GM23248 (cell line): ENCODE measurements at regions of chr12 and their contacts with region 1.

Region 1: DNA sequence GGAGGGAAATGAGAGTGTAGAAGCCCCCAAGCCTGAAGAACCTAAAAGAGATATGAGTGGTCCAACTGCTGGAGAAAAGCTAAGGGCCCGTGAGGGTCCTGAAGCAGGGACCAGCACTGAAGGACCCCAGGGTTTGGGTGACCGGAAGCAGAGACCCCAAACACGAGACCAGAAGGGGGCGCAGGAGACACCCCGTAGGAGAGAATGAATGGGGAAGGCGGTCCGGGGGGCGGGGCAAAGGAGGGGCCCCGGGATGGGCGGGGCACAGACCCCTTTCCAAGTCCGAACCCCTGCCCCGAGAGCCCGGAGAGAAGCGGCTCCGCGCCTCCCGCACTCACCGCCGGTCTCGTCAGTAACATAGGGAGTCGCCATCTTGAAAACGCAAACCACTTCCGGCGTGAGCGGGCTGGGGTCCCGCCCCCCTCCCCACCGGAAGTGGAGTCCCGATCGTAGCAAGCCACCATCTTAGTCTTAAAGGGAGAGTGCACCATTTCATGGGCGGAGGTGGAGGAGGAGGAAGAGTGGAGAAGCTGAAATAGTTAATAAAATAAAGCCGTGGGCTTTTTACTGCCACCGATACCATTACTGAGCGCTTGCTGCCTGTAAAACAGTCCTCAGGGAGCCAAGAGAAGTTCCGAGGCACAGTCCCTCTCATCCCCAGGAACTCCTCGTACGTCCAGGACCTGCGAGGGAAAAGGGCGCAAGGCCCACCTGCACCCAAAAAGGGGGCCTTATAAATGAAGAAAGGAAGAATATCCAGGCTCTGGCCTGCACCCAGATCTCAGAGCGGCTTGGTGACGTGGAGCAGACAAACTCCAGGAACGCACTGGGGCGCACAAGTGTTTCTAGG is 731 bp downstream of the PYM1 start:
- DNase-seq: peak; percentile 91
- H3K4me3 ChIP-seq: peak overlapping the region; percentile 98
- H3K27ac ChIP-seq: peak overlapping the region; percentile 94
- H3K4me1 ChIP-seq: peaks cover 28% of the 10 kb centered on the region
- H3K27me3 ChIP-seq: no peaks in the 10 kb centered on the region

Region 2: DNA sequence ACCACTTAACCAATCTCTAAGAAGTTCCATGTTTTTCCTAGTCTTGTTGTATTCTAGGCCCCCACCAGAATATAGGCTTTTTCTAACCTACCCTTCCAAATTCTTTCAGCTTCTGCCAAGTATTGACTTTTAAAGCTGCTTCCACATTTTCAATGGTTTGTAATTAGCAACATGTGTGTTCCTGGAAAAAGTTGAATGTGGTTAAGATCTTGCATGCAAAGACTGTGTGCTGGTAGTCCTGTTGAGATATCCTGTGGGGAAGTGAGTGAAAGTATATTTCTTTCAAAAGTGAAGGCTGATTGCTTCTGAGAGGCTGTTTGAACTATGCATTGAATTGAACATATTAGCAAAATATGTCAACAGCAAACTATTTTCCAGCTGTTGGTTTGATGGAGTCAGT is 378.2 kb before region 1 on chr12:
- in situ Hi-C with region 1: no loop called
- DNase-seq: no peak
- H3K4me3 ChIP-seq: no peak overlapping the region
- H3K27ac ChIP-seq: no peak overlapping the region
- H3K4me1 ChIP-seq: no peaks in the 10 kb centered on the region
- H3K27me3 ChIP-seq: no peaks in the 10 kb centered on the region

Region 3: DNA sequence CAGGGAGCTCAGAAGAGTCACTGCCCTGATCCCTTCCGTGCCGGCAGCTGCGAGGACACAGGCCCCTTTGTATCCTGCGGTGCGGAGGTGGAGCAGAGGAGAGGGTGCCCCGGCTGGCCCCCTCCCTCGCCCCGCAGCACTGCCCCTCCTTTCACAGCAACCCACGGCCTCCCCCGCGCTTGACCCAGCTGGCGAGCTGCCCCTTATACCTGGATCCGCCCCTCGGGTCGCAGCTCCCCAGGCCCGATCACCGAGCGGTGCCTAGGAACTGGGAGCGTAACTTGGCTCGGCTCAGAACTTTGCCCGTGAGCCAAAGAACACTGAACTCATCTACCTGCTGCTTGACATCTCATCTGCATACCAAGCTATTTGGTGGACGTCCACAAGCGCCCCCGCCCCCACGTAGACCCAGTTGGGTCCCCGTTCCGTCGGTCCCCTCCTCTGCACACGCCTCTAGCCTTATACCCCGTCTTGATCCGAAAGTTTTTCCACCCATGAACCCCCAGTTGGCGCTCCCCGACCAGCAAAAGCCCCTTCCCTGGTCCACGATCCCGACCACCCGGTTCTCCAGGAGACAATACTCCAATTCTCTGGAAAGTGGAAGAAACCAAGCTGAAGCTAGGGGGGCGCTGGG is 96.9 kb before region 1 on chr12:
- in situ Hi-C with region 1: loop called (anchors 10 kb)
- DNase-seq: no peak
- H3K4me3 ChIP-seq: peak overlapping the region; percentile 90
- H3K27ac ChIP-seq: peak overlapping the region; percentile 76
- H3K4me1 ChIP-seq: peaks cover 17% of the 10 kb centered on the region
- H3K27me3 ChIP-seq: no peaks in the 10 kb centered on the region

Region 4: GRCh38 chr12:55842681-55843429 is 84.1 kb before region 1 on chr12 and contains the start of gene MMP19:
- in situ Hi-C with region 1: loop called (anchors 5 kb)
- DNase-seq: peak; percentile 87
- H3K4me3 ChIP-seq: peak within 1 kb of the TSS; percentile 77
- H3K27ac ChIP-seq: peak within 1 kb of the TSS; percentile 26
- H3K4me1 ChIP-seq: peaks cover 44% of the 10 kb centered on the region
- H3K27me3 ChIP-seq: no peaks in the 10 kb centered on the region
- total RNA-seq, gene MMP19: 17.6 and 26.3 TPM in 2 replicates

Region 5: DNA sequence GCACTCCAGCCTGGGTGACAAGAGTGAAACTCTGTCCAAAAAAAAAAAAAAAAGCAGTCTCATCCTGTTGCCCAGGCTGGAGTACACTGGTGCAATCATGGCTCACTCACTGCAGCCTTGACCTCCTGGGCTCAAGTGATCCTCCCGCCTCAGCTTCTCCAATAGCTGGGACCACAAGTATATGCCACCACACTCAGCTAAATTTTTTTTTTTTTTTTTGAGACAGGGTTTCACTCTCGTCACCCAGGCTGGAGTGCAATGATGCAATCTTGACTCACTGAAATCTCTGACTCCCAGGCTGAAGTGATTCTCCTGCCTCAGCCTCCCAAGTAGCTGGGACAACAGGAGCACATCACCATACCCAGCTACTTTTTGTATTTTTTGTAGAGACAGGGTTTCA is 394.1 kb after region 1 on chr12:
- in situ Hi-C with region 1: no loop called
- DNase-seq: peak; percentile 45
- H3K4me3 ChIP-seq: no peak overlapping the region
- H3K27ac ChIP-seq: no peak overlapping the region
- H3K4me1 ChIP-seq: peaks cover 8% of the 10 kb centered on the region; the same call in 1 of the 2 replicates
- H3K27me3 ChIP-seq: no peaks in the 10 kb centered on the region